HepG2 (cell line): ENCODE measurements at regions of chr21 and their contacts with region 1.

Region 1: DNA sequence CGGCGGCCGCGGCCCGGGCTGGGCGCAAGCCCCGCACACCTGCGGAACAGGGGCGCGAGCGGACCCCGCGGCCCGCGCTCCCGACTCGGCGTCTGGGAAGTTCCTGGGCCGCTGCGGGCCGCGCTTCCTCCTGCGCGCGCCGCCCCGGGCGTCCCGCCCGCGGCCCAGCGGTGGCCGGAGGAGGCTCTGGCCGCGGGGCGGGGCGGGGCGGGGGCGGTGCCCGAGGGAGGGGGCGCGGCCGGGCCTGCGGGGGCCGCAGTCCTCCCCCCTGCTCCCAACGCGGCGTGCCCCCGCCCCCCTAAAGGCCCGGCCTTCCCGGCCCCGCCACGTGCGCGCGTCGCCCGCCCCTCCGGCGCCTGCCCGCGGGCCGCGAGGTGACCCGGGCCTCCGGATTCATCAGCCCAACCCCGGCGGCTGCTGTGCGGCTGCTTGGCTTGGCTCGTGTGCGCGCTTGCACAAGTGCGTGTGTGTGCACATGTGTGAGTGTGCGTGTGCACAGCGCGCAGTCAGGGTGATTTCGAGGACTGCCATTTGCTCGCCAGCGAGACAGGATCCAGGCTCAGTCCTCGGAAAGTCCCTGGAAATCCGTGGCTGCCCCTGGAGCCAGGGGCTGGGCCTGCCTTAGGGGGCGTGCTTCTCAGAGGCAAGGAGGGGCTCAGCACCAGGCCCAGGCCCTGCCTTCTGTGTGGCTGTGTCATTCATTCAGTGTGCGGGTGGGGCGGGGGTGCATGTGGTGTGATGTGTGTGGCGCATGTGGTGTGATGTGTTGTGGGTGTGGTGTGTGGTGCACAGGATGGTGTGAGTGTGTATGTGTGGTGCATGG is at the start of gene C2CD2:
- DNase-seq: peak; percentile 55
- ATAC-seq: peak; percentile 53
- H3K4me3 ChIP-seq: peak within 1 kb of the TSS; percentile 54 to 75 (median 54)
- H3K27ac ChIP-seq: peak within 1 kb of the TSS; percentile 48
- H3K4me1 ChIP-seq: peaks cover 76% of the 10 kb centered on the region
- H3K27me3 ChIP-seq: no peaks in the 10 kb centered on the region
- CTCF ChIP-seq: peak; percentile 46
- EP300 ChIP-seq: no peak
- POLR2A ChIP-seq: peak in 1 of 2 experiments; percentile 48; a peak in 1 of 4 replicates
- RAD21 ChIP-seq: no peak
- total RNA-seq, gene C2CD2: 10.4 and 12.5 TPM in 2 replicates

Region 2: DNA sequence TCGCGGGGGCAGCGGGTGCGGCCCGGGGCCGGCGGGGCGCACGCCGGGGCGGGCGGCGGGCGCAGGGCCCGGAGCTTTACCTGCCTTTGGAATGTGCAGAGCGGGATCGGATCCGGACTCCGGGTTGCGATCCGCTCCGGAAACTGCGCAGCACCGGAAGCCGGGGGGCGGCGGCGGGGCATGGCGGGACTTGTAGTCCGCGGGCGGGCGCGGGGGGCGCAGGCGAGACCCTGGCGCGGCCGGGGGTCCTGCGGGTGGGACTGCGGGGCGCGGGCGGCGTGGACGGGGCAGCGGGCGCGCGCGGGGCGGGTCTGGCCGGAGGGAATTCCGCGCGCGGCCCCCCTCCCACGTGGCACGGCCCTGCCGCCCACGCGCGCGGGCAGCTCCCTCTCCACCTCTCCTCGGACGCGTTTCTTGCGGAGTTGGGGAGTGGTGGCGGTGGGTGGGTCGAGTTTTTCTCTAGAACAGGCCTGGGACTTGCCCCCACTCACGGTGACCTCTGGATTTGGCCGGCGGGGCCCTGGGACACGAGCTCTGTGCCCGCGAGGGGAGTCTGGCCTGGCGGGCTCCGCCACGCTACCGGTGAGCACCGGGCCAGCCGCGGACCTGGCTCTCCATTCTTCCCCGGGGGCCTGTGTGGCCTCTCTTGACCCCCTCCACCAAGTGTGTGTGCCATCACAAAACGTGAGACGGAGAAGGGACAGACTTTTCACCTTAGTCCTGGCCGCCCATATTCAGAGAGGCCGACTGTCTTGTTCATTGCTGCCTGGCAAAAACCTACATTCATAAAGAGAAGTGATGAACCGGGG is 74.6 kb before region 1 on chr21 and contains the start of gene PRDM15:
- CTCF ChIA-PET with region 1: no interaction called
- POLR2A ChIA-PET with region 1: interaction called, 5 read pairs
- in situ Hi-C with region 1: no loop called
- intact Hi-C with region 1: loop called (anchors 2 kb)
- DNase-seq: peak; percentile 55
- ATAC-seq: peak; percentile 68
- H3K4me3 ChIP-seq: peak within 1 kb of the TSS; percentile 86 to 90 (median 86)
- H3K27ac ChIP-seq: peak within 1 kb of the TSS; percentile 80
- H3K4me1 ChIP-seq: peaks cover 37% of the 10 kb centered on the region
- H3K27me3 ChIP-seq: no peaks in the 10 kb centered on the region; a peak in 1 of 5 replicates
- CTCF ChIP-seq: no peak
- EP300 ChIP-seq: no peak
- POLR2A ChIP-seq: peak in 1 of 2 experiments; percentile 37; a peak in 1 of 4 replicates
- RAD21 ChIP-seq: no peak; the same call in 1 of the 2 replicates
- total RNA-seq, gene PRDM15: 4.0 and 4.2 TPM in 2 replicates

Region 3: GRCh38 chr21:41926117-41926806 is 27.8 kb before region 1 on chr21:
- CTCF ChIA-PET with region 1: no interaction called
- POLR2A ChIA-PET with region 1: interaction called, 11 read pairs
- in situ Hi-C with region 1: no loop called
- intact Hi-C with region 1: no loop called
- DNase-seq: peak; percentile 60
- ATAC-seq: peak; percentile 87
- H3K4me3 ChIP-seq: peak overlapping the region; percentile 41 to 71 (median 65)
- H3K27ac ChIP-seq: peak overlapping the region; percentile 94
- H3K4me1 ChIP-seq: peaks cover 56% of the 10 kb centered on the region
- H3K27me3 ChIP-seq: no peaks in the 10 kb centered on the region
- CTCF ChIP-seq: no peak
- EP300 ChIP-seq: peak in 1 of 2 experiments; percentile 60; a peak in 2 of 4 replicates
- POLR2A ChIP-seq: peak in 1 of 2 experiments; percentile 25; a peak in 1 of 4 replicates
- RAD21 ChIP-seq: no peak

Region 4: GRCh38 chr21:41933313-41934086 is 20.5 kb before region 1 on chr21:
- CTCF ChIA-PET with region 1: no interaction called
- POLR2A ChIA-PET with region 1: interaction called, 14 read pairs
- in situ Hi-C with region 1: no loop called
- intact Hi-C with region 1: loop called (anchors 2 kb)
- DNase-seq: no peak
- ATAC-seq: peak; percentile 39
- H3K4me3 ChIP-seq: peak overlapping the region; percentile 3 to 59 (median 24); a peak in 4 of 6 replicates
- H3K27ac ChIP-seq: peak overlapping the region; percentile 52
- H3K4me1 ChIP-seq: peaks cover 38% of the 10 kb centered on the region
- H3K27me3 ChIP-seq: no peaks in the 10 kb centered on the region
- CTCF ChIP-seq: 0 out of 2 replicates have a peak, but pooled peaks have one; percentile 6
- EP300 ChIP-seq: no peak
- POLR2A ChIP-seq: no peak
- RAD21 ChIP-seq: no peak

Region 5: DNA sequence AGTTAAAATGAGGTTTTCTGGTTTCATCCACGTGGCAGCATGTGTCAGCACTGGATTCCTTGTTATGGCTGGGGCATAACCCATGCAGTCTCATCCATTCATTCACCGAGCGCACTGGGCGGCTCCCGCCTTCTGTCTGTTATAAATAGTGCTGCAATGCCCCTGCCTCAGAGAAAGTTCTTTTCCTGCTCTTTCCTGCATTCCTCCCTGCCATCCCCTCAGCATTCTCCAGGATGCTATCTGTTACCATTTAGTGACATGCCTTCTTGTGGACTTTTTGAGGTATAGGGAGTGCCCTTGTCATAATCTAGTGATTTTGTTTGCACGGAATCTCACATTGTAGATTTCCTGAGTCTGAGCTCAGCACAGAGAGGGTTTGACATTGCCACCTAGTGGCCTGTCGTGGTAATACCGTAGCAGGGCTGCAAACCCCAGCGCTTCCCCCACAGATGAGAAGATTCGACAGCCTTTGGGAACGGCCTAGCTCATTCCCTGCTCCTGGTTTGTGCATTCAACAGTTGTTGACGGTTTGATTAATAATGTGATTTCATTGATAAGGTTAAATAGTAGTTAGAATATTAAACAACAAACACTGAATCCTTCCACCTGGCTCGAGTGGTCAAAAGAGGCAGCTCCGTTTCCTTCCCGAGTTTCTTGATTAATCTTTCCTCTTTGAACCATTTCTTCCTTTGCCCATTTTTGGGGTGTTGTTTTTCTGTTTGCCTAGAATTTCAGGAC is 163.4 kb after region 1 on chr21:
- CTCF ChIA-PET with region 1: no interaction called
- POLR2A ChIA-PET with region 1: no interaction called
- in situ Hi-C with region 1: loop called (anchors 10 kb)
- intact Hi-C with region 1: no loop called
- DNase-seq: peak; percentile 38
- ATAC-seq: peak; percentile 69
- H3K4me3 ChIP-seq: no peak overlapping the region
- H3K27ac ChIP-seq: no peak overlapping the region
- H3K4me1 ChIP-seq: peaks cover 61% of the 10 kb centered on the region
- H3K27me3 ChIP-seq: peaks cover 0 to 26% of the 10 kb centered on the region in 2 experiments; a peak in 4 of 5 replicates
- CTCF ChIP-seq: peak; percentile 87
- EP300 ChIP-seq: no peak
- POLR2A ChIP-seq: no peak
- RAD21 ChIP-seq: peak; percentile 61